GM12878 (cell line): ENCODE measurements at regions of chr18 and their contacts with region 1.

Region 1: DNA sequence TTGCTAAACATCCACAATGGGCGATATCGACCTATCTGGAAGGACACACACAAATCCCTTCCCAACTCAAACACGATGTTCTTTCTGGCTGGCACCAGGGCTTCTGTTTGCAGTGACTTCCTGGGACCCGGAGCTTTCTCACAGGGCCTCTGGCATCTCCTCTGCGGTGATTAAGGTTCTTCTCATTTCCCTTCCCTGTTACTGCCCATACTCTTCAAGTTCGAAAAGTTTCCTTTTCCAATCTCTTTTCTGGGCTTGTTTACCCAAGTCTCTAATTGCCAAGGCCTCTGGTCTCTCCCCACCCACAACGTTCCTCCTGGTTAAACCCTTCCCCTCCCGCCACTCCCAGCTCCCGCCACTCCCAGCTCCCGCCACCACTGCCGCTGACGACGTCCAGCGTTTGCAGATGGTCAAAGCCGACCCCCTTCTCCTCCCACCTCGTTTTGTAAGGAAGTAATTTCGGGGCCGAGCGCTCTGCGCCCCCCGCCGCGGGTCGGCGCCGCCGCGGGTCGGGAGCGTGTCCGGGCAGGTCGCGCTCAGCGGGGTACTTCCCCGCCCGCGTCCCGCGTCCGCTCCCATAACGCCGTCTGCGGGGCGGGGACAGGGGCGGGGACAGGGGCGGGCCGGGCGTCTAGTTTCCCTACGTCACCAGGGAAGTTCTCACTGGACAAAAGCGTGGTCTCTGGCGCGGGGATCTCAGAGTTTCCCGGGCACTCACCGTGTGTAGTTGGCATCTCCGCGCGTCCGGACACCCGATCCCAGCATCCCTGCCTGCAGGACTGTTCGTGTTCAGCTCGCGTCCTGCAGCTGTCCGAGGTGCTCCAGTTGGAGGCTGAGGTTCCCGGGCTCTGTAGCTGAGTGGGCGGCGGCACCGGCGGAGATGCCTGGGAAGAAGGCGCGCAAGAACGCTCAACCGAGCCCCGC is at the start of gene PMAIP1:
- DNase-seq: no peak
- ATAC-seq: peak; percentile 73
- H3K4me3 ChIP-seq: peak within 1 kb of the TSS; percentile 84
- H3K27ac ChIP-seq: peak within 1 kb of the TSS; percentile 95
- H3K4me1 ChIP-seq: no peaks in the 10 kb centered on the region; the same call in 1 of the 2 replicates
- H3K27me3 ChIP-seq: no peaks in the 10 kb centered on the region
- CTCF ChIP-seq: no peak
- EP300 ChIP-seq: 0 out of 4 replicates have a peak, but pooled peaks of 1 of the 2 experiments have one; percentile 2
- POLR2A ChIP-seq: peak; percentile 100
- RAD21 ChIP-seq: peak; percentile 6; the same call in 1 of the 2 replicates
- polyA plus RNA-seq, gene PMAIP1: 74.0 to 119 TPM

Region 2: DNA sequence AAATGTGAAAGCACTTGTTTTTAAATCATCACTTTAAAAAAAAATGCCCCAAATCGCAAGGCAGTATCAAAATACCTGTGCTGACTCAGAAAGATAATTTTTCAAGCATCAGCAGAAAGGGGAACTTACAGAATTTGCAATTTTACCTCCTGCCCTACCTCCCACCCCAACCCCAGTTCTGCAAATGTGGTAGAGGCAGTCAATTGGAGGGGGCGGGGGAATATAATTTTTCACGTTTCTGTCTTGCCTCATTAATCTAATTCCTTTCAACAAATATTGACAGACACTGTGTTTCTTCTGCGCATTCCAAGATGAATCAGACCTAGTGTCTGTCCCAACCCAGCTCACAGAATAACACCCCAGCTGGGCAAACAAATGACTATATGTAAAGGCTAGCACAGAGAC is 1347.5 kb before region 1 on chr18:
- CTCF ChIA-PET with region 1: no interaction called
- POLR2A ChIA-PET with region 1: no interaction called
- RAD21 ChIA-PET with region 1: no interaction called
- SMC1A ChIA-PET with region 1: no interaction called
- in situ Hi-C with region 1: loop called (anchors 25 kb)
- intact Hi-C with region 1: no loop called
- DNase-seq: peak; percentile 82
- ATAC-seq: peak; percentile 78
- H3K4me3 ChIP-seq: no peak overlapping the region
- H3K27ac ChIP-seq: peak overlapping the region; percentile 80
- H3K4me1 ChIP-seq: peaks cover 37% of the 10 kb centered on the region
- H3K27me3 ChIP-seq: no peaks in the 10 kb centered on the region
- CTCF ChIP-seq: no peak
- EP300 ChIP-seq: peak; percentile 97
- POLR2A ChIP-seq: no peak
- RAD21 ChIP-seq: peak; percentile 25; the same call in 1 of the 2 replicates

Region 3: DNA sequence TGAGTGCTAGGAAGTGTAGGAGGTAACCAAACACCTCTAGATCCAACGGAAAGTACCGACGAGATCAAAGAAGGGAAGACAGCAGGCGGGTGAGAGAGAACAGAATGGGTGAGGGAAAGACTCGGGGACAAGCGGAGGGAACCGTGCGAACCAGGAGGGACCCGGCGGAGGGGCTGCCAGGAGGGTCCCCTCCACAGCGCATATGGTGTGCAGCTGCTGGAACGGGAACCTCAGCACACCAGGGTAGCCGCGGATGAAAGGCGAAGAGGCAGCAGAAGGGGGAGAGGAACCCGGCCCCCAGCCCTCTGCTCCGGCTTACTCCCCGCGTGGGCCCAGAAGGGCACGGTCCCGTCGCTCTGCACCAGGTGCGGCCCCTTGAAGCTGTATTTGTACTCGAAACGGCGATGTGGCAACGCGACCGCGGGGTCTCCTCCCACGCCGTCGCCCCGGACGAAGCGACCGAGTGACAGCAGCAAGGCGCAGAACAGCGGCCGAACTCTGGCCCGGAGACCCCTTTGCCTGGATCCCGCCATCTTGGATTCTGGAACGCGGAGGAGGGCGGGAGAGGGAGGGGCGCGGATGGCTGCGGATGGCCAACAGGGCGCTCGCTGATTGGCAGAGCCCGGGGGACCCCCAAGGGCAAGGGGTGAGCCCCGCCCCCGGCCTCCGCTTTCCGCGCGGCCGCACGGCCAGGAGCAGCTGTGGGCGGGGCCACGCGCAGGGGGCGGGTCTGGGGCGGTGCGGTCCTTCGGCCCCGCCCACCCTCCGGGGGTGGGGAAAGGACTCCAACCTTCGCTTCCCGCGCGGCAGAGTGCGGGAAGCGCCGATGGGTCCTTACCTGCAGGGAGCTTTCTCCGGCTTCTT is 540.6 kb before region 1 on chr18 and contains the start of gene LMAN1:
- CTCF ChIA-PET with region 1: no interaction called
- POLR2A ChIA-PET with region 1: no interaction called
- RAD21 ChIA-PET with region 1: interaction called, 4 read pairs
- SMC1A ChIA-PET with region 1: no interaction called
- in situ Hi-C with region 1: no loop called
- intact Hi-C with region 1: loop called (anchors 10 kb)
- DNase-seq: peak; percentile 51
- ATAC-seq: peak; percentile 97
- H3K4me3 ChIP-seq: peak within 1 kb of the TSS; percentile 68
- H3K27ac ChIP-seq: peak within 1 kb of the TSS; percentile 77
- H3K4me1 ChIP-seq: no peaks in the 10 kb centered on the region
- H3K27me3 ChIP-seq: no peaks in the 10 kb centered on the region
- CTCF ChIP-seq: no peak
- EP300 ChIP-seq: no peak
- POLR2A ChIP-seq: peak; percentile 90
- RAD21 ChIP-seq: no peak
- polyA plus RNA-seq, gene LMAN1: 15.0 to 20.3 TPM

Region 4: GRCh38 chr18:59885579-59886163 is 13.9 kb before region 1 on chr18:
- CTCF ChIA-PET with region 1: interaction called, 30 read pairs
- POLR2A ChIA-PET with region 1: interaction called, 68 read pairs
- RAD21 ChIA-PET with region 1: interaction called, 56 read pairs
- SMC1A ChIA-PET with region 1: interaction called, 72 read pairs
- in situ Hi-C with region 1: no loop called
- intact Hi-C with region 1: loop called (anchors 1 kb)
- DNase-seq: peak; percentile 78
- ATAC-seq: peak; percentile 86
- H3K4me3 ChIP-seq: peak overlapping the region; percentile 63
- H3K27ac ChIP-seq: peak overlapping the region; percentile 91
- H3K4me1 ChIP-seq: peaks cover 38% of the 10 kb centered on the region
- H3K27me3 ChIP-seq: no peaks in the 10 kb centered on the region
- CTCF ChIP-seq: no peak
- EP300 ChIP-seq: peak; percentile 88 to 95
- POLR2A ChIP-seq: no peak
- RAD21 ChIP-seq: 0 out of 2 replicates have a peak, but pooled peaks have one; percentile 4

Region 5: DNA sequence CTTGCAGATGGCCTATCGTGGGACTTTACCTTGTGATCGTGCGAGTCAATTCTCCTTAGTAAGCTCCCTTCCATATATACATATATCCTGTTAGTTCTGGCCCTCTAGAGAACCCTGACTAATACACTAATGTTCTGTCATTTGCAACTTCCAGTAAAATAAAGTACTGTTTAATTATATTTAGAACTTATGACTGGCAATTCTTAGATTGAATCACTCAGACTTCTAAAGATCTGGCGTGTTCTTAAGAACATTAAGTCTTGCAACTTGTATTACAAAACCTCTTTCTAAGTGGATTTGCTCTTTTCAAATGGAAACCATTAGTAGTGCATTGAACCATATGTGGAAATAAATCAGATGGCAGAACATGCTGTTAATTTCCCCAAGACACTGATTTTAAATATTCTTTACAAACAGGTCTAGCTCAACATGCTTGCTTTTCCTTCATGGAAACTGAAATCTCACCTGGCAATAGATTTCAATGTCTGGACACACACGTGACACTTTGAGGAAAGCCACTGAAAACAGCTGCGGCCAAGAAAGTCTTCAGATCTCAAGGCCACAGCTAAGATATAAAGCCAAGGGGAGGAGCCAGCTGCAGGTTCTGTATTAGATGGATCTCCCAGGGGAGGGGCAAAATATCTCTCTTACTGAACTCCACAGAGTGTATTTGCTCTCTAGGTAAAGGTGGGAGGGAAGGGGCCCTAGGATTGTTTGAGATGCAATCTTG is 50.8 kb after region 1 on chr18:
- CTCF ChIA-PET with region 1: interaction called, 12 read pairs
- POLR2A ChIA-PET with region 1: interaction called, 25 read pairs
- RAD21 ChIA-PET with region 1: interaction called, 55 read pairs
- SMC1A ChIA-PET with region 1: interaction called, 68 read pairs
- in situ Hi-C with region 1: no loop called
- intact Hi-C with region 1: loop called (anchors 2 kb)
- DNase-seq: no peak
- ATAC-seq: peak; percentile 48
- H3K4me3 ChIP-seq: no peak overlapping the region; the same call in 1 of the 2 replicates
- H3K27ac ChIP-seq: no peak overlapping the region
- H3K4me1 ChIP-seq: peaks cover 40% of the 10 kb centered on the region
- H3K27me3 ChIP-seq: no peaks in the 10 kb centered on the region
- CTCF ChIP-seq: no peak
- EP300 ChIP-seq: 0 out of 4 replicates have a peak, but pooled peaks of 1 of the 2 experiments have one; percentile 49
- POLR2A ChIP-seq: no peak
- RAD21 ChIP-seq: no peak

Region 6: GRCh38 chr18:59996370-59996966 is 96.9 kb after region 1 on chr18:
- CTCF ChIA-PET with region 1: interaction called, 19 read pairs
- POLR2A ChIA-PET with region 1: no interaction called
- RAD21 ChIA-PET with region 1: interaction called, 29 read pairs
- SMC1A ChIA-PET with region 1: interaction called, 6 read pairs
- in situ Hi-C with region 1: no loop called
- intact Hi-C with region 1: no loop called
- DNase-seq: no peak
- ATAC-seq: peak; percentile 85
- H3K4me3 ChIP-seq: no peak overlapping the region
- H3K27ac ChIP-seq: no peak overlapping the region
- H3K4me1 ChIP-seq: no peaks in the 10 kb centered on the region
- H3K27me3 ChIP-seq: no peaks in the 10 kb centered on the region
- CTCF ChIP-seq: peak; percentile 74 to 79 (median 75)
- EP300 ChIP-seq: no peak
- POLR2A ChIP-seq: no peak
- RAD21 ChIP-seq: peak; percentile 70

Region 7: DNA sequence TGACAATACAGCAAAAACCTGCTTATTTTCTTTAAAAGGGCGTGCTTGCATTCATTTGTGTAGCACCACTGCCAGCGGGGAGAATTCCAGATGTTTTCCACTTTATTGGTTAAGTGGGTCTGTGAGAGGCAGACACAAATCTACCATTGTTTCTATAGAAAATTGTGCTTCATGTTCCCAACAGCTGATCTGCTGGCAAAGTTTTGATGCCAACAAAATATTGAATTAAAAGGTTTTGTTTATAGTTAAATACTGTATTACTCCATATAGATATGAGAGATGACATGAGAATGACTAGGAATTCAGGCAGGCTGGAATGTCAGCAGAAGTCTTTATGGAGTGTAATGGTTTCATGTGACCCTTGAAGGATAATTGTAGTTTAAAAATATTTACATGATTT is 290.3 kb after region 1 on chr18:
- CTCF ChIA-PET with region 1: no interaction called
- POLR2A ChIA-PET with region 1: no interaction called
- RAD21 ChIA-PET with region 1: no interaction called
- SMC1A ChIA-PET with region 1: no interaction called
- in situ Hi-C with region 1: no loop called
- intact Hi-C with region 1: no loop called
- DNase-seq: no peak
- ATAC-seq: no peak
- H3K4me3 ChIP-seq: no peak overlapping the region
- H3K27ac ChIP-seq: no peak overlapping the region
- H3K4me1 ChIP-seq: no peaks in the 10 kb centered on the region
- H3K27me3 ChIP-seq: peaks cover 0 to 3% of the 10 kb centered on the region in 2 experiments; a peak in 1 of 4 replicates
- CTCF ChIP-seq: no peak
- EP300 ChIP-seq: no peak
- POLR2A ChIP-seq: no peak
- RAD21 ChIP-seq: no peak